Caco-2 (cell line): ENCODE measurements at regions of chr11 and their contacts with region 1.

Region 1: DNA sequence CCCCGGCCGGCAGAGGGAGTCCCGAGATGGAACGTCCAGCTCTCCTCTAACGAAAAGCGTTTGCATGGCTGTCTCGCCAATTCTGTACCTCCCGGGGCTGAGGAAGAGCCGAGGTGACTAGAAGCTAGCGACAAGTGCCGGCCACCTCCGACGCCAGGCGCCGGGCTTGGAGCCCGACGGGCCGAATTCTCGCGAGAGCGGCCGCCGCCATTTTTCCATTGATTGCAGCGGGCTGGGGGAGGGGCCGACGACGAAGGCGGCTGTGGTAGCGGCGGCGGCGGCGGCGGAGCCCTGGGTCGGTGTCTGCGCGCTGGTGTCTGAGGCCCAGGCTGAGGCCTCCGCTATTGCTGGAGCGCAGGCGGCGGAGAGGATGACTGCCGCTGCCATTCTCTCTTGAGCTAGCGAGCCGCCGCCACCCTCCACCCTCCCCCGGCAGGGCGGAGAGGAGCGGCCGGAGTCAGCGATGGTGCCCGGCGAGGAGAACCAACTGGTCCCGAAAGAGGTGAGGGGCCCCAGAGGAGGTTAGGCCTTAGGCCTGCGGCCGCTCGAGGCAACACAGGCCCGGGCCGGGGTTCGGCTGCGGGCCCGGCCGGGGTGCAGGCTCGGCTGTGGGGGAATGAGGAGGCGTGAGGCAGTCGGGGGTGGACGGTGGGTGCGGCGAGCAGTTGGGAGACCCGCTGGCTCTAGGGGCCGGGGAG is at the start of gene USP47:
- DNase-seq: peak; percentile 95 to 96
- H3K4me3 ChIP-seq: peak within 1 kb of the TSS; percentile 84
- H3K4me3 Mint-ChIP-seq: no peak within 1 kb of the TSS
- H3K27ac Mint-ChIP-seq: no peak within 1 kb of the TSS
- H3K4me1 ChIP-seq: peaks cover 30% of the 10 kb centered on the region
- H3K4me1 Mint-ChIP-seq: no peaks in the 10 kb centered on the region
- H3K27me3 ChIP-seq: no peaks in the 10 kb centered on the region
- H3K27me3 Mint-ChIP-seq: no peaks in the 10 kb centered on the region
- CTCF ChIP-seq: peak in 1 of 2 experiments; percentile 77
- total RNA-seq, gene USP47: 50.4 and 52.8 TPM in 2 replicates

Region 2: GRCh38 chr11:11735586-11735985 is 106.3 kb before region 1 on chr11:
- CTCF ChIA-PET with region 1: no interaction called
- POLR2A ChIA-PET with region 1: no interaction called
- intact Hi-C with region 1: no loop called
- DNase-seq: no peak
- H3K4me3 ChIP-seq: no peak overlapping the region
- H3K4me3 Mint-ChIP-seq: no peak overlapping the region
- H3K27ac Mint-ChIP-seq: no peak overlapping the region
- H3K4me1 ChIP-seq: no peaks in the 10 kb centered on the region
- H3K4me1 Mint-ChIP-seq: no peaks in the 10 kb centered on the region
- H3K27me3 ChIP-seq: no peaks in the 10 kb centered on the region
- H3K27me3 Mint-ChIP-seq: peaks cover 28% of the 10 kb centered on the region
- CTCF ChIP-seq: no peak

Region 3: DNA sequence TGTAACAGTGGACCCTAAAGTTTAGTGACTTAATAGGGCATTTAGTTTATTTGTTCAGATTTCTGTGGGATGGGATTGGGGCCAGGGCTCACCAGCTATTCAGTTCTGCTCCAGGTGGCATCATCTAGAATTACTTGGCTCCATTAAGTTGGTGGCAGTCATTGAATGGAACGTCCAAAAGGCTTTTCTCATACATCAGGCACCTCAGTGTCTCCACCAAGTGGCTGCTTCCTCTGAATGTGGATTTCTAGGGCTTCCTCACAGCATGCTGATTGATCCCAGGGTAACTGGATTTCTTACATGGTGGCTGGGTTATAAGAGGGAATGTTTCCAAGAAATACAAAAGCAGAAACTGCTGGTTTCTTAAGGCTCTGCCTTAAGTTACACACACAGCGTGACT is 34.6 kb after region 1 on chr11:
- CTCF ChIA-PET with region 1: interaction called, 6 read pairs
- POLR2A ChIA-PET with region 1: interaction called, 11 read pairs
- intact Hi-C with region 1: loop called (anchors 2 kb)
- DNase-seq: peak; percentile 43 to 51
- H3K4me3 ChIP-seq: no peak overlapping the region
- H3K4me3 Mint-ChIP-seq: no peak overlapping the region
- H3K27ac Mint-ChIP-seq: no peak overlapping the region
- H3K4me1 ChIP-seq: peaks cover 16% of the 10 kb centered on the region
- H3K4me1 Mint-ChIP-seq: peaks cover 21% of the 10 kb centered on the region
- H3K27me3 ChIP-seq: no peaks in the 10 kb centered on the region
- H3K27me3 Mint-ChIP-seq: no peaks in the 10 kb centered on the region
- CTCF ChIP-seq: peak; percentile 27 to 30

Region 4: GRCh38 chr11:11895672-11896071 is 53.8 kb after region 1 on chr11:
- CTCF ChIA-PET with region 1: interaction called, 15 read pairs
- POLR2A ChIA-PET with region 1: interaction called, 3 read pairs
- intact Hi-C with region 1: loop called (anchors 5 kb)
- DNase-seq: no peak
- H3K4me3 ChIP-seq: no peak overlapping the region
- H3K4me3 Mint-ChIP-seq: no peak overlapping the region
- H3K27ac Mint-ChIP-seq: no peak overlapping the region
- H3K4me1 ChIP-seq: no peaks in the 10 kb centered on the region
- H3K4me1 Mint-ChIP-seq: no peaks in the 10 kb centered on the region
- H3K27me3 ChIP-seq: no peaks in the 10 kb centered on the region
- H3K27me3 Mint-ChIP-seq: no peaks in the 10 kb centered on the region
- CTCF ChIP-seq: peak in 1 of 2 experiments; percentile 23